ENCODE measurements at regions of chr19 and their contacts with region 1.

Region 1: DNA sequence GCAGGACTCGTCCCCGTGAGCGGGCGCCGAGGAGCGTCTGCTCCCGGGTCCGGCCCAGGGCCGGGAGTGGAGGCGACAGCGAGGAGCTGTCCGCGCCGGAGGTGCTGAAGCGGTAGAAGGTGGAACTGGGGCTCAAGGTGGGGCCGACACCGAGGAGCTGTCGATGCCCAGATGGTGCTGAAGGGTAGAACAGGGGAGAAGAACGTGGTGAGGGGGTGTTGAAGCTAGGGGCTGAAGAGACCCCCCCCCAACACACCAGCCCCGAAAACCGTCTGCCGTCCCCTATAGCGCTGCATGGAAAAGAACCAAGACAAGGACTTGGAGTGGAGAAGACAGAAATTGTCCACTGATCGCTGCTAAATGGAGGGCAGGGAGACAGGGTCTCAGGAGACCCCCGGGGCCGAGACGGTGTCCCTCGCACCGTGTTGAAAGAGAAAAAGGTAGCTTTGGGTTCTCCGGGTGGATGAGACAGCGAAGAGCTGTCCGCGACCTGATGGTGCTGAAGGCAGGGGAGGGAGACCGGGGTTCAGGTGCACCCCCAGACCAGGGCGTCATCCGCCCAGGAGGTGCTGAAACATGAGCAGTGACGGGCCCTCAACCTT is 7.1 kb upstream of the PDE4C start:
- DNase-seq: peak; percentile 51 to 62
- H3K4me3 ChIP-seq: no peak overlapping the region
- H3K27ac ChIP-seq: no peak overlapping the region
- H3K4me1 ChIP-seq: peaks cover 5% of the 10 kb centered on the region; the same call in 1 of the 2 replicates
- H3K27me3 ChIP-seq: no peaks in the 10 kb centered on the region
- CTCF ChIP-seq: no peak

Region 2: DNA sequence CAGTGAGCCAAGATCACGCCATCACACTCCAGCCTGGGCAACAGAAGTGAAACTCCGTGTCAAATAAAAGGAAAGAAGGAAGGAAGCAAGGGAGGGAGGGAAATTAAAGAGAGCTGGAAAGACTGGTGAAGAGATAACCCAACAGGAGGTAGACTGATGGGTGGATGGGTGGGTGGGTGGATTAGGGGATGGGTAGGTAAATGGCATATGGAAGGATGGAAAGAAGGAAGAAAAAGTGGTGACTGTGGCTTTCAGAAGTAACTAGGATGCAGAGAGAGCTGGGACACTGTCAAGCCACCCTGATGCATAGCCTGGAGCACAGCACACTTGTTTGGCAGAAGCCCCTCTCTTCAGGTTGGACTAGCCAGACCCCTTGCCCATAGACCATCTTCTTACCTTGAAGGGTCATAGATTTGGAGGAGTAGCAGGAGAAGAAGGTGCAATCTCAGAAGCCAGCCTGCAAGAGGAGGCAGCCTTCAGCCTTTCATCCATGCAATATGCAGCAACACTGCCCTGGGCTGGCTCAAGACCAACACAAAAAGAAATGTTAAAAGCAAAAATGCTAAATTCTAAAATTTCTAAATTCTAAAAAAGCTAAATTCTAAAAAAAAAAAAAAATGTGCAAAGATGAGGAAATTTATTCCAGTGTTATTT is 35.9 kb after region 1 on chr19:
- CTCF ChIA-PET with region 1: no interaction called
- POLR2A ChIA-PET with region 1: interaction called, 12 read pairs
- intact Hi-C with region 1: no loop called
- DNase-seq: no peak
- H3K4me3 ChIP-seq: no peak overlapping the region
- H3K27ac ChIP-seq: no peak overlapping the region
- H3K4me1 ChIP-seq: peaks cover 14% of the 10 kb centered on the region
- H3K27me3 ChIP-seq: no peaks in the 10 kb centered on the region
- CTCF ChIP-seq: no peak